Heart left ventricle (tissue), 16 donors: ENCODE measurements at regions of chr6 and their contacts with region 1.

Region 1: DNA sequence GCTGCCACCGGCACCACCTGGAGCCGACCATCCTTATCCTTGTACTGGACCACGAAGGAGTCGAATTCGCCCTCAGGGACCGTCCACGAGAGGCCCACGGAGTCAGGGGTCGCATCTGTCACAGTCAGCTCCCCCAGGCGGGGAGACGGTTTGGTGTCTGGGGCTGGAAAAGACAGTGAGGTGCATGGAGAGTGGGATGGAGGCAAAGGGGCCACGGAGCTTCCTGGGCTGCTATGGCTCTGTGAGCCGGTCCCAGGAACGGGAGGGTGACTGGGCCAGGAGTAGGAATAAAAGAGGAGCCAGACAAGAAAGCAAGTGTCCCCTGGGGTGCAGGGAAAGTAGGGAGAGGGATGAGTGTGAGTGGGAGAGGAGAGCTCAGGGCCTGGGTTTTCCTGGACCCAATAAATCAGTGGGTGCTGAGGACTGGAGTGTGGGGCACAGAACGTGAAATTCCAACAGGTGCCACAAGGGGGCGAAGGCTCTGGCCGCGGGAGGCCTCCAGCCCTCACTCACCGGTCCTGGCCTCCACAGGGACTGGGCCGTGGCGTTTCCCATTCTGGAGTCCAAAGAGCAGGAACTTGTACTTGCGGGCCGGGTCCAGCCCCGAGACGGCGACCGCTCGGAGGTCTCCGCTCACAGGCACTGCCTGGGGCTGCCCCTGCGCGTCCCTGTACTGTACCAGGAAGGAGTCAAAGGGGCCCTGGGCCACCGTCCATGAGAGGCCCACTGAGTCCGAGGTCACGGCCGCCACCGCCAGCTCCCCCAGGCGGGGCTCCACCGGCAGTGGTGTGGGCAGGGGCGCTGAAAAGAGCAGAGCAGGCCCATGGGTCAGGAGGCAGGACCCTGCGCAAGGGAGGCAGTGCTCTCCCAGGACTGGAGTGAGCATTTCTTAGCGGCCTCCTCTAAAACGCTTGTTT is 9.9 kb downstream of the CYP21A2 start:
- DNase-seq: peak; percentile 64 to 85 (median 75)
- ATAC-seq: peak; percentile 23 to 63 (median 55)
- H3K4me3 ChIP-seq: peak overlapping the region in 1 of 12 donors; percentile 5
- H3K27ac ChIP-seq: peak overlapping the region in 11 of 12 donors; percentile 3 to 88 (median 74)
- H3K4me1 ChIP-seq: peaks cover 0 to 34% (median 24%) of the 10 kb centered on the region in 12 donors
- H3K27me3 ChIP-seq: no peaks in the 10 kb centered on the region
- CTCF ChIP-seq: peak; percentile 76 to 93 (median 80)
- POLR2A ChIP-seq: no peak

Region 2: DNA sequence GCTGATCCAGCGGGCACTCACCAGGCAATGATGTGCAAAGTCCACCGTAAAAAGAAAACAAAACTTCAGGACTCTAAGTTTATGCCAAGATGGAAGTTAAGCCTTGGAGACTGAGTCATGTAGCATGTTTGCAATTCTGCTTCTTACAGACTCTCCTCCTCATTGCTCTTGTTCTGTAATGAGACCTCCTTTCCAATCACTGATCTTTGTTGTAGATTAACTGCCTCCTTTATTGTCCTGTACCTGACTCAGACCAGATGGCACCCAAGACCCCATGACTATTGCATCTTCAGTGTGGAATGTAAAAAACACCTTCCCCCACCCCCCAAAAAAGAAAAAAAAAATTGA is 196.6 kb before region 1 on chr6:
- intact Hi-C with region 1: no loop called
- DNase-seq: no peak
- ATAC-seq: no peak
- H3K4me3 ChIP-seq: no peak overlapping the region
- H3K27ac ChIP-seq: no peak overlapping the region
- H3K4me1 ChIP-seq: no peaks in the 10 kb centered on the region
- H3K27me3 ChIP-seq: no peaks in the 10 kb centered on the region
- CTCF ChIP-seq: no peak
- POLR2A ChIP-seq: no peak

Region 3: GRCh38 chr6:32113386-32114352 is 65.6 kb after region 1 on chr6:
- intact Hi-C with region 1: loop called in 2 of 10 experiments (anchors 2 to 10 kb)
- DNase-seq: peak; percentile 84 to 91 (median 88)
- ATAC-seq: peak; percentile 45 to 77 (median 74)
- H3K4me3 ChIP-seq: no peak overlapping the region
- H3K27ac ChIP-seq: peak overlapping the region; percentile 37 to 95 (median 88)
- H3K4me1 ChIP-seq: peaks cover 7 to 65% (median 52%) of the 10 kb centered on the region in 12 donors
- H3K27me3 ChIP-seq: peaks cover 0 to 3% (median 0%) of the 10 kb centered on the region in 9 donors
- CTCF ChIP-seq: peak in 9 of 12 donors; percentile 8 to 57 (median 37)
- POLR2A ChIP-seq: no peak

Region 4: DNA sequence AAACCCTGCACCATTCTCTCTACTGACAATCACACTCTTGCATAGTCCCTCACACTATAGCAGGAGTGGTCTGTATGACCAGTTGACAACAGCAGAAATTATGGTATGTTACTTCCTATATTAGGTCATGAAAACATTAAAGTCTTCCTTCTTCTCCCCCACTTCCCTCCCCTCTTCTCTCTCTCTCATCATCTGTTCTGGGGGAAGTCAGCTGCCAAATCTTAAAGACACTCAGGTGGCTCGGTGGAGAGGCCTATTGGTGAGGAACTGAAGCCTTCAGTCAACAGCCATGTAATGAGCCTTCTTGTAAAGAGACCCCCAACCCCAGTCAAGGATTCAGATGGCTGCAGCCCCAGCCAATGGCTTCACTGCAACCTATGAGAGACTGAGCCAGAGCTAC is 334.6 kb after region 1 on chr6:
- intact Hi-C with region 1: no loop called
- DNase-seq: no peak
- ATAC-seq: no peak
- H3K4me3 ChIP-seq: no peak overlapping the region
- H3K27ac ChIP-seq: no peak overlapping the region
- H3K4me1 ChIP-seq: peaks cover 0 to 1% (median 0%) of the 10 kb centered on the region in 12 donors
- H3K27me3 ChIP-seq: peaks cover 0 to 4% (median 0%) of the 10 kb centered on the region in 9 donors
- CTCF ChIP-seq: no peak
- POLR2A ChIP-seq: no peak